Natural killer cell (primary cell): ENCODE measurements at regions of chr6 and their contacts with region 1.

Region 1: GRCh38 chr6:28124102-28124970 is at the start of gene ZSCAN16:
- DNase-seq: peak; percentile 76 to 84
- ATAC-seq: peak; percentile 96 to 98 (median 98)
- H3K4me3 ChIP-seq: peak within 1 kb of the TSS; percentile 60
- H3K4me3 Mint-ChIP-seq: peak within 1 kb of the TSS; percentile 92
- H3K27ac ChIP-seq: peak within 1 kb of the TSS; percentile 72
- H3K27ac Mint-ChIP-seq: peak within 1 kb of the TSS; percentile 85 to 89
- H3K4me1 ChIP-seq: peaks cover 9% of the 10 kb centered on the region
- H3K4me1 Mint-ChIP-seq: peaks cover 33 to 40% of the 10 kb centered on the region in 2 donors
- H3K27me3 ChIP-seq: no peaks in the 10 kb centered on the region
- H3K27me3 Mint-ChIP-seq: no peaks in the 10 kb centered on the region
- CTCF ChIP-seq: no peak
- total RNA-seq, gene ZSCAN16: 7.7 to 9.1 (median 7.8) TPM

Region 2: DNA sequence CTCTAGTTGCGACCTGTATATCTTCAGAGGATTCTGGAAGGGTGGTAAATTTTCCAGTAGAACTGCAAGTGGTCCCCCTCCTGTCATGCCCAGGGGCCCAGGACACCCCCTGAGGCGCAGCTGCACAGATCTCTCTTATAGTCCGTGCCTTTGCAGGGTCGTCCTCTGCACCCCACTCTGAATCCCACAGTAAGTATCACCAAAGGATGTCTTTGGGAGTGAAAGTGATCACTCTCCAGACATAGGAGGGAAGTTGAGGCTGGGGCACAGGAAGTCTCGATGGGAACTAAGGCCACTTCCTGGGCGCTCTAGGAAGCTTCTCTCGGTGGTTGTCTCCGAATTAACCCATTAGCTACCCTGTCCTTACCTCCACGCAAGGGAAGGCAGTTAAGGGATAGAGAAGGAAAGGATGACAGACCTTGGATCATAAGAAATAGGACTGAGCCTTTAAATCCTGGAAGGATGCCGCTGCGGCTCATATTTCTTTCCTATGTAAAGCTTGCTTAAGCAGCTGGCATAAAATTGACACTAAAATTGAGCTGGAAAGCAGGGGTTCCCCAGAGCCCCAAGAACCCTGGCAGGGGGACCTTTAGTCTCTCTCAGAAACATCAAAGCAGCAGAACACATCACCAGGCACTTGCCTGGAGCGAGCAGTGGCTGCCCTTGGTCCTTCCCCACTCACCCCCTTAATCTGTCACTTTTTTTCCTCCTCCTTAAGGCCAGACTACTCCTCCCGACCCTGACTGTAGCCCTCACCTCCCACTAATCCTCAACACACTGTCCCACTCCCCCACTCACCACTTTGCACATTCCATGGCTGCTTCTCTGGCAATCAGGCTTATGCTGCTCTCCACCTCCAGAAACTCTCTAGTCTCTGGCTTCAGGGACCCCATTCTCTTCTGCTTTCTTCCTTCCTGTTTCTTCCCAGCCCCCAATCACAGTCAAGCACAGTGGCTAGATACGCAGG is 128.0 kb after region 1 on chr6 and contains the start of gene ZKSCAN4:
- intact Hi-C with region 1: loop called (anchors 5 kb)
- DNase-seq: peak; percentile 64 to 92
- ATAC-seq: peak; percentile 90 to 93 (median 91)
- H3K4me3 ChIP-seq: peak within 1 kb of the TSS; percentile 81
- H3K4me3 Mint-ChIP-seq: peak within 1 kb of the TSS; percentile 98
- H3K27ac ChIP-seq: peak within 1 kb of the TSS; percentile 59
- H3K27ac Mint-ChIP-seq: peak within 1 kb of the TSS; percentile 68 to 88
- H3K4me1 ChIP-seq: peaks cover 12% of the 10 kb centered on the region
- H3K4me1 Mint-ChIP-seq: peaks cover 31 to 38% of the 10 kb centered on the region in 2 donors
- H3K27me3 ChIP-seq: peaks cover 3% of the 10 kb centered on the region
- H3K27me3 Mint-ChIP-seq: peaks cover 3 to 8% of the 10 kb centered on the region in 2 donors
- CTCF ChIP-seq: no peak
- total RNA-seq, gene ZKSCAN4: 1.6 to 4.2 (median 2.9) TPM

Region 3: GRCh38 chr6:28280595-28281287 is 156.4 kb after region 1 on chr6:
- intact Hi-C with region 1: no loop called
- DNase-seq: no peak
- ATAC-seq: no peak
- H3K4me3 ChIP-seq: peak overlapping the region; percentile 35
- H3K4me3 Mint-ChIP-seq: peak overlapping the region; percentile 67
- H3K27ac ChIP-seq: no peak overlapping the region
- H3K27ac Mint-ChIP-seq: no peak overlapping the region
- H3K4me1 ChIP-seq: peaks cover 9% of the 10 kb centered on the region
- H3K4me1 Mint-ChIP-seq: peaks cover 8% of the 10 kb centered on the region in 2 donors
- H3K27me3 ChIP-seq: peaks cover 10% of the 10 kb centered on the region
- H3K27me3 Mint-ChIP-seq: peaks cover 23 to 24% of the 10 kb centered on the region in 2 donors
- CTCF ChIP-seq: no peak